Calu3 (cell line): ENCODE measurements at regions of chr11 and their contacts with region 1.

Region 1: GRCh38 chr11:101848262-101848661 is 66.5 kb upstream of the CEP126 start:
- DNase-seq: no peak
- H3K4me3 Mint-ChIP-seq: no peak overlapping the region
- H3K27ac Mint-ChIP-seq: no peak overlapping the region
- H3K4me1 Mint-ChIP-seq: no peaks in the 10 kb centered on the region
- H3K27me3 Mint-ChIP-seq: no peaks in the 10 kb centered on the region
- CTCF ChIP-seq: no peak

Region 2: GRCh38 chr11:101428918-101429317 is 419.3 kb before region 1 on chr11:
- CTCF ChIA-PET with region 1: no interaction called
- intact Hi-C with region 1: loop called (anchors 1 kb)
- DNase-seq: peak; percentile 9
- H3K4me3 Mint-ChIP-seq: no peak overlapping the region
- H3K27ac Mint-ChIP-seq: no peak overlapping the region
- H3K4me1 Mint-ChIP-seq: no peaks in the 10 kb centered on the region
- H3K27me3 Mint-ChIP-seq: no peaks in the 10 kb centered on the region
- CTCF ChIP-seq: no peak

Region 3: DNA sequence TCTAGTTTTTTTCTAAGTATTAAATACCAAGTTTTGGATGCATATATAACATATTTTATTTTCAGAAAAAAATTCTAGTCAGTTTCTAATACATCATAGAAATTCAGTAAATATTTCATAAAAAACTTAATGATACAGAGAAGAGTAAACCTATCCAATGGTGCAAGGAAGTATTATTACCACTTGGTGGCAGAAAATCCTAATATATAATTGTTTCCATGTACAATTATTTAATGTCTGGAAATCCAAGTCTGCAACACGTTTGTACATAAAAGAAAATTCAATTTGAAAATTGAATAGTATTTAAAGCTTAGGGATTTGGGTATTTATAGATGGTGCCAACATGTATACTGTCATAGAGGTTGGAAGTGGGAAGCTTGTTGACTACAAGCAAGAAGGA is 391.4 kb before region 1 on chr11:
- CTCF ChIA-PET with region 1: interaction called, 5 read pairs
- intact Hi-C with region 1: loop called (anchors 1 kb)
- DNase-seq: no peak
- H3K4me3 Mint-ChIP-seq: no peak overlapping the region
- H3K27ac Mint-ChIP-seq: no peak overlapping the region
- H3K4me1 Mint-ChIP-seq: no peaks in the 10 kb centered on the region
- H3K27me3 Mint-ChIP-seq: no peaks in the 10 kb centered on the region
- CTCF ChIP-seq: no peak

Region 4: GRCh38 chr11:101759771-101760450 is 88.4 kb before region 1 on chr11:
- CTCF ChIA-PET with region 1: no interaction called
- intact Hi-C with region 1: loop called (anchors 2 kb)
- DNase-seq: no peak
- H3K4me3 Mint-ChIP-seq: no peak overlapping the region
- H3K27ac Mint-ChIP-seq: peak overlapping the region; percentile 37
- H3K4me1 Mint-ChIP-seq: peaks cover 27% of the 10 kb centered on the region
- H3K27me3 Mint-ChIP-seq: no peaks in the 10 kb centered on the region
- CTCF ChIP-seq: no peak

Region 5: GRCh38 chr11:101894505-101894904 is 46.2 kb after region 1 on chr11:
- CTCF ChIA-PET with region 1: no interaction called
- intact Hi-C with region 1: no loop called
- DNase-seq: no peak
- H3K4me3 Mint-ChIP-seq: no peak overlapping the region
- H3K27ac Mint-ChIP-seq: no peak overlapping the region
- H3K4me1 Mint-ChIP-seq: no peaks in the 10 kb centered on the region
- H3K27me3 Mint-ChIP-seq: no peaks in the 10 kb centered on the region
- CTCF ChIP-seq: no peak